HCT116 (cell line): ENCODE measurements at regions of chr12 and their contacts with region 1.

Region 1: DNA sequence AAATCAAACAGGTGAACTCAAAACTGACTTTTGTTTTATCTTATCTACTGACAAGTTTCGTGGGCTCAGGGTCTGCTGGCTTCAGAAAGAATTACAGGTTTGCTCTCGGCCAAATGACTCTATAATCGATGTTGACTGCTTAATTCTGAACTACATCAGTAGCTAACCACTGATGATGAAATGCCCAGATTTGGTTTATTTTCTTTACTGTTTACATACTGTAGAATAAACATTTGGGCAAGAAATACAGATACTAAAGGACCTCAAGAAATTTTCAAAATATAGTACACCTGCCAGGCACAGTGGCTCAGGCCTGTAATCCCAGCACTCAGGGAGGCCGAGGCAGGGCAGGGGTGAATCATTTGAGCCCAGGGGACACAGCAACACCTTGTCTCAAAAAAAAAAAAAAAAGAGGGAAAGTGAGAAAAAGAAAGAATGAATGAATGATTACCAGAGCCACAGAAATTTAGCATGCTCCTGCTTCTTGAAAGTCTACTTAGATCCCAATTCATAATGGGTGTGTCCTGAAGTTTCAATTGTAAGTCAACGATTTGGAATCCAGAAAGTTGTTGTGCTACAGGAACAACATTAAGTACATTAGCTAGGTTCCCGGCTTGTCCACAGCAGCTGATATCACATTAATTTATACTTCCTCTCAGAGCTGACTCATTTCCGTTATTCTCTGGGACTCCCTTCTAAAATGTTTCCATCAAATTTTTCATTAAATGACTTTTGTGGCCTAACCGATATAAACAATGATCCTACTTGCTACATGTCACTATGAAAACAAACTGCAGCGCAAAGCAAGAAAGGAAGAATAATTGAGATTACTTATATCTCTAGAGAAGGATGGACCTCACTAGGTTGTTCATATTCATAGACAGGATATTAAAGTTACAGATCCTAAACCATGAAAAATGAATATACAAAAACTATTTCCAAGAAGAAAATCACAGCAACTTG is 134.3 kb downstream of the MED13L start:
- DNase-seq: no peak
- ATAC-seq: no peak
- H3K4me3 ChIP-seq: no peak overlapping the region
- H3K27ac ChIP-seq: peak overlapping the region; percentile 21; the same call in 1 of the 2 replicates
- H3K4me1 ChIP-seq: peaks cover 30 to 74% of the 10 kb centered on the region in 2 experiments
- H3K27me3 ChIP-seq: no peaks in the 10 kb centered on the region
- CTCF ChIP-seq: no peak
- POLR2A ChIP-seq: no peak
- RAD21 ChIP-seq: no peak

Region 2: DNA sequence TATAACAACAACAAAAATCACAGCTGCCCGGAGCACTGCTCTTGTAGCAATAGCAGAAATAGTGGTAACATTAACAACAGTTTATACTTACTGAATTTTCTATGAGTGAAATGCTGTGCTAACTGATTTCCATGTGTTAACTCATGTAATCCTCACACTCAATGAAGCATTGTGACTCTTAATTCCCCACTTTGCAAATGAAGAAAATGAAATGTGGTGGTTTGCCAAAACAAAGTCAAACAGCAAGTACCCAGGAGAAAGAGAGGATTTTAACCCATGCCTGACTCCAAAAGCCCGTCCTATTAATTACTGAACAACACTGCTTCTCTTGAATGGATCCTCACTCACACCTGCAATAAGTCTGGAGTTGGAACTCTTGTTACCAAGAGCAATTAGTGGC is 10.8 kb after region 1 on chr12:
- CTCF ChIA-PET with region 1: no interaction called
- POLR2A ChIA-PET with region 1: no interaction called
- RAD21 ChIA-PET with region 1: no interaction called
- intact Hi-C with region 1: no loop called
- DNase-seq: no peak
- ATAC-seq: no peak
- H3K4me3 ChIP-seq: no peak overlapping the region
- H3K27ac ChIP-seq: no peak overlapping the region
- H3K4me1 ChIP-seq: peaks cover 0 to 9% of the 10 kb centered on the region in 2 experiments; a peak in 2 of 4 replicates
- H3K27me3 ChIP-seq: no peaks in the 10 kb centered on the region
- CTCF ChIP-seq: no peak
- POLR2A ChIP-seq: no peak
- RAD21 ChIP-seq: no peak

Region 3: GRCh38 chr12:116673681-116674111 is 530.5 kb after region 1 on chr12:
- CTCF ChIA-PET with region 1: no interaction called
- POLR2A ChIA-PET with region 1: no interaction called
- RAD21 ChIA-PET with region 1: no interaction called
- intact Hi-C with region 1: loop called (anchors 10 kb)
- DNase-seq: peak; percentile 21
- ATAC-seq: peak; percentile 87
- H3K4me3 ChIP-seq: no peak overlapping the region
- H3K27ac ChIP-seq: no peak overlapping the region
- H3K4me1 ChIP-seq: peaks cover 0 to 8% of the 10 kb centered on the region in 2 experiments; a peak in 3 of 4 replicates
- H3K27me3 ChIP-seq: no peaks in the 10 kb centered on the region
- CTCF ChIP-seq: peak; percentile 42 to 57 (median 51)
- POLR2A ChIP-seq: no peak
- RAD21 ChIP-seq: peak; percentile 67